ENCODE measurements at regions of chr7 and their contacts with region 1.

Region 1: GRCh38 chr7:31443457-31443856 is 70.4 kb upstream of the ITPRID1 start:
- DNase-seq: peak; percentile 18
- ATAC-seq: no peak
- H3K4me3 ChIP-seq: no peak overlapping the region
- H3K4me3 Mint-ChIP-seq: no peak overlapping the region
- H3K27ac ChIP-seq: no peak overlapping the region
- H3K27ac Mint-ChIP-seq: no peak overlapping the region
- H3K4me1 ChIP-seq: no peaks in the 10 kb centered on the region
- H3K4me1 Mint-ChIP-seq: no peaks in the 10 kb centered on the region
- H3K27me3 ChIP-seq: no peaks in the 10 kb centered on the region
- H3K27me3 Mint-ChIP-seq: peaks cover 3% of the 10 kb centered on the region
- CTCF ChIP-seq: peak; percentile 75

Region 2: GRCh38 chr7:31663072-31663471 is 219.6 kb after region 1 on chr7:
- CTCF ChIA-PET with region 1: no interaction called
- POLR2A ChIA-PET with region 1: no interaction called
- intact Hi-C with region 1: no loop called
- DNase-seq: no peak
- ATAC-seq: no peak
- H3K4me3 ChIP-seq: no peak overlapping the region
- H3K4me3 Mint-ChIP-seq: no peak overlapping the region
- H3K27ac ChIP-seq: no peak overlapping the region
- H3K27ac Mint-ChIP-seq: no peak overlapping the region
- H3K4me1 ChIP-seq: no peaks in the 10 kb centered on the region
- H3K4me1 Mint-ChIP-seq: no peaks in the 10 kb centered on the region
- H3K27me3 ChIP-seq: no peaks in the 10 kb centered on the region
- H3K27me3 Mint-ChIP-seq: peaks cover 6% of the 10 kb centered on the region
- CTCF ChIP-seq: no peak

Region 3: GRCh38 chr7:31735991-31736982 is 292.8 kb after region 1 on chr7:
- CTCF ChIA-PET with region 1: interaction called, 11 read pairs
- POLR2A ChIA-PET with region 1: no interaction called
- intact Hi-C with region 1: no loop called
- DNase-seq: peak; percentile 10
- ATAC-seq: peak; percentile 24
- H3K4me3 ChIP-seq: no peak overlapping the region
- H3K4me3 Mint-ChIP-seq: no peak overlapping the region
- H3K27ac ChIP-seq: no peak overlapping the region
- H3K27ac Mint-ChIP-seq: no peak overlapping the region
- H3K4me1 ChIP-seq: no peaks in the 10 kb centered on the region
- H3K4me1 Mint-ChIP-seq: no peaks in the 10 kb centered on the region
- H3K27me3 ChIP-seq: no peaks in the 10 kb centered on the region
- H3K27me3 Mint-ChIP-seq: peaks cover 8% of the 10 kb centered on the region
- CTCF ChIP-seq: peak; percentile 74